ENCODE measurements at regions of chr18 and their contacts with region 1.

Region 1: DNA sequence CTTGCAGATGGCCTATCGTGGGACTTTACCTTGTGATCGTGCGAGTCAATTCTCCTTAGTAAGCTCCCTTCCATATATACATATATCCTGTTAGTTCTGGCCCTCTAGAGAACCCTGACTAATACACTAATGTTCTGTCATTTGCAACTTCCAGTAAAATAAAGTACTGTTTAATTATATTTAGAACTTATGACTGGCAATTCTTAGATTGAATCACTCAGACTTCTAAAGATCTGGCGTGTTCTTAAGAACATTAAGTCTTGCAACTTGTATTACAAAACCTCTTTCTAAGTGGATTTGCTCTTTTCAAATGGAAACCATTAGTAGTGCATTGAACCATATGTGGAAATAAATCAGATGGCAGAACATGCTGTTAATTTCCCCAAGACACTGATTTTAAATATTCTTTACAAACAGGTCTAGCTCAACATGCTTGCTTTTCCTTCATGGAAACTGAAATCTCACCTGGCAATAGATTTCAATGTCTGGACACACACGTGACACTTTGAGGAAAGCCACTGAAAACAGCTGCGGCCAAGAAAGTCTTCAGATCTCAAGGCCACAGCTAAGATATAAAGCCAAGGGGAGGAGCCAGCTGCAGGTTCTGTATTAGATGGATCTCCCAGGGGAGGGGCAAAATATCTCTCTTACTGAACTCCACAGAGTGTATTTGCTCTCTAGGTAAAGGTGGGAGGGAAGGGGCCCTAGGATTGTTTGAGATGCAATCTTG is 50.6 kb downstream of the PMAIP1 start:
- DNase-seq: peak; percentile 35
- H3K4me3 Mint-ChIP-seq: no peak overlapping the region
- H3K27ac Mint-ChIP-seq: peak overlapping the region; percentile 68
- H3K4me1 Mint-ChIP-seq: peaks cover 49% of the 10 kb centered on the region
- H3K27me3 Mint-ChIP-seq: no peaks in the 10 kb centered on the region

Region 2: GRCh38 chr18:59846814-59847490 is 103.4 kb before region 1 on chr18:
- CTCF ChIA-PET with region 1: no interaction called
- POLR2A ChIA-PET with region 1: no interaction called
- intact Hi-C with region 1: loop called (anchors 2 kb)
- DNase-seq: peak; percentile 80
- H3K4me3 Mint-ChIP-seq: no peak overlapping the region
- H3K27ac Mint-ChIP-seq: peak overlapping the region; percentile 74
- H3K4me1 Mint-ChIP-seq: peaks cover 16% of the 10 kb centered on the region
- H3K27me3 Mint-ChIP-seq: peaks cover 1% of the 10 kb centered on the region

Region 3: GRCh38 chr18:59907172-59907571 is 43.2 kb before region 1 on chr18:
- CTCF ChIA-PET with region 1: interaction called, 4 read pairs
- POLR2A ChIA-PET with region 1: interaction called, 65 read pairs
- intact Hi-C with region 1: loop called (anchors 1 kb)
- DNase-seq: peak; percentile 34
- H3K4me3 Mint-ChIP-seq: peak overlapping the region; percentile 3
- H3K27ac Mint-ChIP-seq: peak overlapping the region; percentile 76
- H3K4me1 Mint-ChIP-seq: peaks cover 64% of the 10 kb centered on the region
- H3K27me3 Mint-ChIP-seq: no peaks in the 10 kb centered on the region

Region 4: DNA sequence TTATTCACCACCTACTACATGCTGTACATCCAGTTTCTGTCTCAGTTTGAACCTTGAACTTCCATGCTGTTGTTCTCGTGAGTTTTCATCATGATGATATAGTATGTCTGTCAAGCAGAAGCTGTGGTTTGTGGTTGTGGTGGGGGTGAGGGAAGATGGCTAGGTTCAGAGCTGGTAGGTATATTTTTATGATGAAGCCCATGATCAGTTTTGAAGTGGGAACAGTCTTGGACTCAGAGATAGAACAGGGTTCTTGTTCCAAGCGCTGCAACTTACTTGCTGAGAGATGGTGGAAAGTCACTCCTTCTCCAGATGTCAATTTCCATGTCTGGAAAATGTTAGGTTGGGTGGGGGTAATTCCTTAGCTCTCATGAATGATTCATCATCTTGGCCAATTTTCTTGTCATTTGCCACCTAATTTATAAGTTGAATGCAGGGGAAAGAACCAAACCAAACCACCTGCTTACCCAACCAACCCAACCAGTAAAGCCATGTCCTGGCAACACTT is 28.9 kb before region 1 on chr18:
- CTCF ChIA-PET with region 1: no interaction called
- POLR2A ChIA-PET with region 1: interaction called, 20 read pairs
- intact Hi-C with region 1: loop called (anchors 1 kb)
- DNase-seq: peak; percentile 80
- H3K4me3 Mint-ChIP-seq: no peak overlapping the region
- H3K27ac Mint-ChIP-seq: peak overlapping the region; percentile 9
- H3K4me1 Mint-ChIP-seq: peaks cover 33% of the 10 kb centered on the region
- H3K27me3 Mint-ChIP-seq: peaks cover 2% of the 10 kb centered on the region

Region 5: DNA sequence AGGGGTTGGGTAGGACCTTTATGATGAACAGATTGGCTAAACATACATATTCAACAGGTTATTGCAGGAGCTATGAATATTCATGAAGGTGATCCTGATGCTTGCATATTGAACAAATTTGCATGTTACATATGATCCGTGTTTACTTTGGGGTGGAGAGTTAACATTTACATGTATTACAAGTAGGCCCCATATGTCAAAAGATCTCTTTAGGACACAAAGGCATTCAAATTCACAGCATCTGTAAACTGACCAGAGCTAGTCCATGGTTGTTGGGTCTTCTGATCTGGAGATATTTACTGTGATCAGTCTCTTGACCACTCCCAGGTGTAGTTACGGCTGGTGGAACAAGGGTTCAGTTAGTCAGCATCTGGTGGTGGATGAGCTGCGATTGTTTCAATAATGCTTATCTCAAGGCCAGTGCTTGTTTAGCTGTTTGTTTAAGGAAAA is 29.8 kb after region 1 on chr18:
- CTCF ChIA-PET with region 1: no interaction called
- POLR2A ChIA-PET with region 1: no interaction called
- intact Hi-C with region 1: no loop called
- DNase-seq: no peak
- H3K4me3 Mint-ChIP-seq: no peak overlapping the region
- H3K27ac Mint-ChIP-seq: no peak overlapping the region
- H3K4me1 Mint-ChIP-seq: no peaks in the 10 kb centered on the region
- H3K27me3 Mint-ChIP-seq: peaks cover 1% of the 10 kb centered on the region

Measured in activated CD4-positive, alpha-beta memory T cell treated with anti-CD3 and anti-CD28 coated beads for 36 hours (primary cell).